Right cardiac atrium (tissue), 5 donors: ENCODE measurements at regions of chr1 and their contacts with region 1.

Region 1: GRCh38 chr1:1122078-1122811 is 6.4 kb upstream of the C1orf159 start:
- DNase-seq: peak; percentile 87 to 94 (median 94)
- ATAC-seq: peak; percentile 89 to 91
- H3K4me3 ChIP-seq: no peak overlapping the region
- H3K27ac ChIP-seq: no peak overlapping the region
- H3K4me1 ChIP-seq: no peaks in the 10 kb centered on the region
- H3K27me3 ChIP-seq: no peaks in the 10 kb centered on the region

Region 2: GRCh38 chr1:1173793-1174415 is 51.7 kb after region 1 on chr1 and contains the start of gene TTLL10:
- intact Hi-C with region 1: no loop called
- DNase-seq: peak in 2 of 3 donors; percentile 54 to 60
- ATAC-seq: peak; percentile 7 to 18
- H3K4me3 ChIP-seq: no peak within 1 kb of the TSS
- H3K27ac ChIP-seq: no peak within 1 kb of the TSS
- H3K4me1 ChIP-seq: no peaks in the 10 kb centered on the region
- H3K27me3 ChIP-seq: no peaks in the 10 kb centered on the region
- total RNA-seq, gene TTLL10: not detected

Region 3: GRCh38 chr1:1231400-1232223 is 109.4 kb after region 1 on chr1 and contains the start of gene SDF4:
- intact Hi-C with region 1: loop called in 1 of 4 experiments (anchors 10 kb)
- DNase-seq: peak; percentile 97 to 99 (median 99)
- ATAC-seq: peak; percentile 96 to 97
- H3K4me3 ChIP-seq: peak within 1 kb of the TSS; percentile 83
- H3K27ac ChIP-seq: peak within 1 kb of the TSS; percentile 65
- H3K4me1 ChIP-seq: peaks cover 11% of the 10 kb centered on the region
- H3K27me3 ChIP-seq: no peaks in the 10 kb centered on the region
- total RNA-seq, gene SDF4: 156 to 215 (median 168) TPM

Region 4: DNA sequence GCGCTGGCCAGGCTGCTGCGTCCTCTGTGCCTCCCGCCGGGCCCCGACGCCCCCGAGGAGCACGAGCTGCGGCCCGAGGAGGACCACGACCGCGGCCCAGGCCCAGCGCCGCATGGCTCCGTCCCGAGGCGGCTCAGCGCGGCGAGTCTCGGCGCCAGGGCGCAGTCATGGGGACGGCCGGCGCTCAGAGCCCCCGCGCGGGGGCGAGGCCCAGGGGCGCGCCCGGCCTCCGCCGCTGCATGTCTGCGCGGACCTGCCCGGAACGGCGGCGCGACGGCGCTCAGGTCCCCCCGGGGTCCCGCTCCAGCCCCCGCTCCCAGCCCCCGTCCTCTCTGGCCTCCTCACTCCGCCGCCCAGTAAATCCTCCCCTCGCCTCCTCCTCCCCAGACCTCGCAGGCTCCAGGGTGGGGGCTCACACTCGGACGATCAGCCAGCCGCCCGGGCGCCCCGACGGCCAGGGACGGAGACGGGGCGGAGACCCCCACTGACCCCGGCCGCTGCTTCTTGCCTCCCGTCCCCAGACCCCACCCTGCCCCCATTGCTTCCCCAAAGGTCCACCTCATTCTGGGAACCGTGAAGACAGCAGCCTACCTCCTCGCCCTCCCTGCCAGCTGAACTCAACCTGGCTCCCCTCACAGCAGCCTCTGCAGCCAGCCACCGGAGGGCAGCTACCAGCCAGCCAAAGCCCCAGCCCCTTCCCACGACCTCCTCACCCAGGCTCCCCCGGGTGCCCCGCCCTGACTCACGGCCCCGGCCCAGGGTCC is 124.5 kb after region 1 on chr1 and contains the start of gene C1QTNF12:
- intact Hi-C with region 1: loop called in 1 of 4 experiments (anchors 5 kb)
- DNase-seq: peak in 1 of 3 donors; percentile 39
- ATAC-seq: no peak
- H3K4me3 ChIP-seq: no peak within 1 kb of the TSS
- H3K27ac ChIP-seq: no peak within 1 kb of the TSS
- H3K4me1 ChIP-seq: no peaks in the 10 kb centered on the region
- H3K27me3 ChIP-seq: no peaks in the 10 kb centered on the region
- total RNA-seq, gene C1QTNF12: 0.94 to 2.4 (median 1.1) TPM in 3 of 4 donors, not detected in the other

Region 5: DNA sequence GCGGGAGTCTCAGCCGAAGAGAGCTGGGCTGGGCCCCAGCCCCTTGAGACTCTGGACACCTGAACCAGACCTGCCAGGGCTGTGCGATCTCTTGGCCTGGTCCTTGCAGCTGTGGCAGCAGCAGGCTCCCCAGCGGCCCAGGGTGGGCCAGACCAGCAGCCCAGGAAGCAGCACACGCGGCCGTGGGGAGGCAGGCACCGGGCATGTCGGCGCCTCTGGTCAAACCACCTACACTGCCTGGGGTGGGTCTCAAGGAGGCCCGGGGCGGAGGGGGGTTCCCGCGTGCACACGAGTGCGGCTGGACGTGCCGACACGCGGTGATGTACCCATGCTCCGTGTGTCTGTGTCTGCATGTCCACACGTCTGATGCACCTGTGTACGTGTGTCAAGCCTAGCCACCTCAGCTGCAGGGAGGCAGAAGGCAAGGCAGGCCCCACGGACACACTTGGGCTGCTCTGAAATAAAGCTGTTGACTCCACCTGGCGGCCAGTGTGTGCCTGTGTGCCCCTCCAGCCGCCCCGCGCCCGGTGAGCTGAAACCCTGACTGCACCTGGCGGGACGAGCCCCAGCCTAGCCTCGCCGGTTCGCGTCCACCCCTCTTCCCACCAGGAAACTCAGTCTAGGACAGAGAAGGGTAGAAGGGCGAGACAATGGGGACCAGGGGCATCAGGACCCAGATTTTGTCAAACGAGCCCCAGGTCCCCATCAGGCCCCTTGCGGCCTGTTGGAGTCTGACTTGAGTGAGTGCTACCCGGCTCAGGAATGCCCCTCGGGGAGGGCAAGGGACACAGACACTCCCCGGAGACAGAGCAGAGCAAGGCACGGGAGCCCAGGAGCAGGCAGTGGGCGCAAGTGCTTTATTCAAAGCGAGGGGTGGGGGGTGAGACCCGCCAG is 169.6 kb after region 1 on chr1:
- intact Hi-C with region 1: loop called (anchors 1 to 10 kb)
- DNase-seq: peak; percentile 65 to 89 (median 83)
- ATAC-seq: peak; percentile 55 to 64
- H3K4me3 ChIP-seq: no peak overlapping the region
- H3K27ac ChIP-seq: no peak overlapping the region
- H3K4me1 ChIP-seq: no peaks in the 10 kb centered on the region
- H3K27me3 ChIP-seq: no peaks in the 10 kb centered on the region